Right ventricle myocardium superior (tissue), 1 donor: ENCODE measurements at regions of chr3 and their contacts with region 1.

Region 1: GRCh38 chr3:10945683-10946287 is 46.8 kb upstream of the SLC6A1 start:
- DNase-seq: peak; percentile 77
- ATAC-seq: peak; percentile 86

Region 2: GRCh38 chr3:10986592-10986991 is 40.8 kb after region 1 on chr3:
- intact Hi-C with region 1: loop called (anchors 5 kb)
- DNase-seq: no peak
- ATAC-seq: peak; percentile 81